Cardiac septum (tissue), 1 donor: ENCODE measurements at regions of chr11 and their contacts with region 1.

Region 1: DNA sequence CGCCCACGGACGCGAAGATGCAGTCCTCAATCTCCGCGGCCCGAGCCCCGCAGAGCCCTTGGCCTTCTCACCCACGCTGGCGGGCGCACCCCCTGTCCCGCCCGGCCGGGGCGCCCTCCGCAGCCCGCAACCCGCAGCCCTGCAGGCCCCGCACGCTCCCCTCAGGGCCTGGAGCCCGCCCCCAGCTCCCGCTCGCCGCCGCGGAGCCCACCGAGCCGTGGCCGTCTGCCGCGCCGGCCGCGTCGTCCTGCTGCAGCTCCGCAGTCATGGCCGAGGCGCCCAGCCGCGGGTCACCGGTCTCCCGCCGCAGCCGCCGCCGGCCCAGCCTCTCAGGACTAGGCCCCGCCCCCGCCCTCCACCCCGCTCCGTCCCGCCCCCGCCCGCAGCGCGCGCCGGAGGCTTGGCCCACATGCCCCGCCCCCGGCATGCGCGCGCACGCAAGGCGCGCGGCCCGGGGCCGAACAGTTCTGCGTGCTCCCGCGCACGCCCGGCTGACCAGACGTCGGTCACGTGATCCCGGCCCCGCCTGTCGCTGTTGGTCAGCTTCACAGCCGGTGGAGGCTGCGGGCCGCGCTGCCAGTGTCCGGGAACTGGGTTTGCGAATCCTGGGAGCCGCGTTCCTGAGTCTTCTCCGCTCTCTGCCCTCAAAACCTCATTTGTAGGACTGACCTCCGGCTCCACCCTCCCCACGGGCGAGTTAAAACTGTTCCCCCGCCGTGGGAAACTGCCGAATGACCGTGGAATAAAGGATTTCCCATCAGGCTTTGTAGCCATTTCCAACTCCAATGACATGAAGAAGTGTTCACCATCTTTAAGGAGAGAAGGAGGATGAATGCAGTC is at the start of gene USP28:
- DNase-seq: peak; percentile 99
- total RNA-seq, gene USP28: 139 TPM

Region 2: GRCh38 chr11:113730887-113731726 is 144.3 kb before region 1 on chr11:
- intact Hi-C with region 1: no loop called
- DNase-seq: no peak

Region 3: GRCh38 chr11:113806406-113806805 is 69.0 kb before region 1 on chr11:
- intact Hi-C with region 1: loop called (anchors 10 kb)
- DNase-seq: no peak